Activated CD4-positive, alpha-beta memory T cell treated with anti-CD3 and anti-CD28 coated beads, Interleukin-2, amount 10 ng/mL, durations not matched to agents 7 days and 5 days (primary cell): ENCODE measurements at regions of chr19 and their contacts with region 1.

Region 1: DNA sequence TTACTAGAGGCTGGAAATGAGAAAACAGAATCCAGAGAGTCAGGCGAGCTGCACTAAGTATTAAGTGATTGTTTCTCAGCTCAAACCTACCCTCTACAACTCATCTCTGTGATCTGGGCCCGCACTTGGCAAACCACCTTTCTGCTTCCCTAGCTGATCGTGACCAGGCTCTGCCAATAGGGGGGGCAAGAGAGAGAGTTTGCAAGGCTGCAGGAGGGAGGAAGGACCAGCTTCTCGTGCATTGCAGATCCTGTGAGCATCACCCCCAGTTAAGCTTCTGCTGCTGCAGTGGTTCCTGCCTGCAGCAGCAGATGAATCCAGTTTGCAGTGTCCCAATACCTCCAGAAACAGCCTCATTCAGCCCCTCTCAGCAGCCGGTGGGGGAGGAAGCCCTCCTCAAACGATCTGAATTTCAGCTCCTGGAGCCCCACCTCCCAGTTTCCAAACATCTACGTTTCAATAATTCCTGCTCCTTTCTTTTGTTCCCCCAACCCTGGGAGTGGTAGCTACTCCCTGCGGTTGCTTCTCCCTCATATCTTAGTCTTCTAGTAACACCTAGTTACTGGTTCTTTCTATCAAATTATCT is 20.0 kb downstream of the XRCC1 start:
- DNase-seq: peak; percentile 86
- H3K4me3 Mint-ChIP-seq: no peak overlapping the region
- H3K27ac Mint-ChIP-seq: peak overlapping the region; percentile 1
- H3K4me1 Mint-ChIP-seq: peaks cover 10% of the 10 kb centered on the region
- H3K27me3 Mint-ChIP-seq: no peaks in the 10 kb centered on the region

Region 2: DNA sequence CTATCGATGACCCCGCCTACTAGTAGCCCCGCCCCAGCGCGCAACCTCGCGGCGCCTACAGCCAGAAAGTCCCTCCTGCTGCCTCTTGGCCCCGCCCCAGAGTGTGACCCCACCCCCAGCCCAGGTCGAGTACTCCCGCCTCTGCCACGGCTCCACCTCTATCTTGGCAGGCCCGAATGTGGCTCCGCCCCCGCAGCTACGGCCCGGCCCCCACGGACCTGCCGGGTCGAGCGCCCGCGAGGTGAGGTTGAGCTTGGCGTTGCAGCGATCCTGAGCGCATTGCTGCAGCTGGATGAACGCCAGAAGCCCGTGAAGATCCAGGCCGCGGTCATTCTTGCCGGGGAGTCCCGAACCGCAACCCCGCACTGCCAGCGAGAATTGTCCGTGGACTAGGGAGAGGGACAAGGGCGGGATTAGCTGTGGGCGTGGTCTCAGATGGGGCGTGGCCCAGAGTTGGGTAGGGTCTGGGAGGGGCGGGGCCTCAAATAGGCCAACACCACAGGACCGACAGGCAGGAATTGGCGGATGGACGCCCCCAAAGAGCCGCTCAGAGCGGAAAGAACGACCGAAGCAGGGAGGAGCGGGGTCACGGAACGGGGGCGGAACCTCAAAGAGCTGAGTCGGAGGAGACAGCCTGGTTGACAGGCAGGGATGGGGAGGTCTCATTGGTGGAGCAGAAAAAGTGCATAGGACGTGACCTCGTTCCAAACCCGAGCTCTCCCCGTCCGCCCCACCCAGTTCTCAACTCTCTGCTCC is 91.7 kb before region 1 on chr19:
- CTCF ChIA-PET with region 1: interaction called, 13 read pairs
- POLR2A ChIA-PET with region 1: no interaction called
- DNase-seq: peak; percentile 99
- H3K4me3 Mint-ChIP-seq: peak overlapping the region; percentile 88
- H3K27ac Mint-ChIP-seq: peak overlapping the region; percentile 93
- H3K4me1 Mint-ChIP-seq: peaks cover 34% of the 10 kb centered on the region
- H3K27me3 Mint-ChIP-seq: peaks cover 12% of the 10 kb centered on the region

Region 3: DNA sequence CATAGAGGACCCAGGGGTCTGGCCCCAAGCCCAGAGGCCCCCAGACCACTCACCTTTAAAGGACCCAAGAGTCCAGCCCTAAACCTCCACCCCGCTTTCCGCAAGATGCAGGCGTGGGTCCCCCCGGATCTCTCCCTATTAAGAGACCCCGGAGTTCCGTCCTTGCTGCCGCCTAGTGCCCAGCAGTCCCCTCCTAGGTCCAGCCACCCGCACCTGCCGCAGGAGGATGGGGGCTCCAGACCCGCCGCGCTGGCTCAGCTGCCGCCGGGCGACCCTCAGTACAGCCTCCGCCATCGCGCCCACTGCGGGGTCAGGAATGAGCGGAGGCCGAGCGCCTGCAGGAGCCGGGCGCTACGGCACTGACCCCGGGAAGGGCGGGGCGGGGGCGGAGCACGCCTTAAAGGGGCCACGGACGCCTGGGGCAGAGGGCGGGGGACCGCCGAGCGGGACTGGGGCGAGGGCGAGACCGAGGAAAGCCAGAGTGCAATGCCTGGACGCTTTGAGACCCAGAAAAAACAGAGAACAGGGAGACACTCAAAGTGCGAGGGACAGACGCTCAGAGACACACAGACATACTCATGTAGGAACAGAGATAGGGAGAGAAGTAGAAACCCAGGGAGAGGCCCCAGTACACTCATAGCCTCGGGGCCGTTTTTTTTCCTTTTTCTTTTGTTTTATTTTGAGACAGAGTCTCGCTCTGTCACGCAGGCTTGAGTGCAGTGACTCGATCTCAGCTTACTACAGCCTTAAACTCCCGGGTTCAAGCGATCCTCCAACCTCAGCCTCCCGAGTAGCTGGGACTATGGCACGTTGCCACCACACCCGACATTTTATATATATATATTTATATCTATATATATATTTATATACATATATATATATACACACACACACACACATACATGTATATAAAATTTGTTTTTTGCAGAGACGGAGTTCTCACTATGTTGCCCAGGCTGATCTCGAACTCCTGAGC is 28.1 kb before region 1 on chr19 and contains the start of gene ETHE1:
- CTCF ChIA-PET with region 1: interaction called, 27 read pairs
- POLR2A ChIA-PET with region 1: interaction called, 5 read pairs
- DNase-seq: peak; percentile 83
- H3K4me3 Mint-ChIP-seq: peak within 1 kb of the TSS; percentile 94
- H3K27ac Mint-ChIP-seq: peak within 1 kb of the TSS; percentile 79
- H3K4me1 Mint-ChIP-seq: peaks cover 28% of the 10 kb centered on the region
- H3K27me3 Mint-ChIP-seq: no peaks in the 10 kb centered on the region
- total RNA-seq, gene ETHE1: 90.7 to 91.1 TPM

Region 4: GRCh38 chr19:43532962-43533545 is 22.2 kb before region 1 on chr19 and contains the start of gene ZNF575:
- CTCF ChIA-PET with region 1: interaction called, 27 read pairs
- POLR2A ChIA-PET with region 1: interaction called, 5 read pairs
- DNase-seq: peak; percentile 89
- H3K4me3 Mint-ChIP-seq: peak within 1 kb of the TSS; percentile 86
- H3K27ac Mint-ChIP-seq: peak within 1 kb of the TSS; percentile 98
- H3K4me1 Mint-ChIP-seq: peaks cover 26% of the 10 kb centered on the region
- H3K27me3 Mint-ChIP-seq: no peaks in the 10 kb centered on the region
- total RNA-seq, gene ZNF575: 4.1 to 4.8 TPM

Region 5: DNA sequence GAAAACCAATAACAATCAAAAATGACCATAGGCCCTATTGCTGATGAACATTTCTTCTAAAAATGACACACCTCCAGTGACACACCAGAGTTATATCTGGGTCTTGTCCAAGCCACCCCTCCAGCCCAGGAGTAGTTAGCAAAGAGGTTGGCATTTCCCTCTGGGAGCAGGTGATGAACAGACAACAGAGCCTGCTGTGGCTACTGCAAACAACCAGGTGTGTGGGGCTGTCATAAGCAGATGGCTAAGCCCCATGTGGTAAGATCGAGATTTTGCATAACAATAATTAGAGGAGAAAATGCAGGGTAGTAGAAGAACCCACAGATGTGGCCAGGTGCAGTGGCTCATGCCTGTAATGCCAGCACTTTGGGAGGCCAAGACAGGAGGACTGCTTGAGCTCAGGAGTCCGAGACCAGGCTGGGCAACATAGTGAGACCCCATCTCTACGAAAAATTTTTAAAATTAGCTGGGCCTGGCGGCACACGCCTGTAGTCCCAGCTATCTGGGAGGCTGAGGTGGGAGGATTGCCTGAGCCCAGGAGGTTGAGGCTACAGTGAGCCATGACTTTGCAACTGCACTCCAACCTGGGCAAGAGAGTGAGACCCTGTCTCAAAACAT is 15.0 kb after region 1 on chr19:
- CTCF ChIA-PET with region 1: interaction called, 22 read pairs
- POLR2A ChIA-PET with region 1: interaction called, 10 read pairs
- DNase-seq: no peak
- H3K4me3 Mint-ChIP-seq: no peak overlapping the region
- H3K27ac Mint-ChIP-seq: no peak overlapping the region
- H3K4me1 Mint-ChIP-seq: peaks cover 26% of the 10 kb centered on the region
- H3K27me3 Mint-ChIP-seq: no peaks in the 10 kb centered on the region

Region 6: GRCh38 chr19:43575156-43575950 is 20.1 kb after region 1 on chr19 and contains the starts of genes PINLYP and XRCC1:
- CTCF ChIA-PET with region 1: interaction called, 22 read pairs
- POLR2A ChIA-PET with region 1: interaction called, 10 read pairs
- DNase-seq: peak; percentile 98
- H3K4me3 Mint-ChIP-seq: peak within 1 kb of the TSS; percentile 95
- H3K27ac Mint-ChIP-seq: peak within 1 kb of the TSS; percentile 87
- H3K4me1 Mint-ChIP-seq: peaks cover 43% of the 10 kb centered on the region
- H3K27me3 Mint-ChIP-seq: peaks cover 3% of the 10 kb centered on the region
- total RNA-seq, gene PINLYP: 3.7 to 4.4 TPM
- total RNA-seq, gene XRCC1: 42.5 to 46.1 TPM